ENCODE measurements at regions of chr17 and their contacts with region 1.

Region 1: DNA sequence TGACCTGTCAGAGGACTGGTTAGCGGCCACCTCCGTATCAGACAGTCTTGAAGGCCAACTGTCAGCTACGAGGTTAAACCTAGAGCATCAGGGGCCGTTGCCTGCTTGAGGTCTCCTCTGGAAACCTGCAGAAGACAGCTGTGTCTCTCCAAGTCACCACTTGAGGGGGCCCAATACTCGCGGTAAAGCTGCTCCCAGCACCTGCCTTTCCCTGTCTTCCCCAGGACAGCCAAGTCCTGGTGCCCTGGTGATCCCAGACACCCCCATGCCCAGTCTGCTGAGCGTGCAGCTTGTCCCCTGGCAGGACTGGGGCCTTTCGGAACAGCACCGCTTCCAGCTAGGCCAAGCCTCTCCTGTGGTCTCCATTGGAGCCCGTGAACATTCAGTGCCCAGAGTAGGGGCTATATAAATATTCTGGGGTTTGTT is 80.1 kb downstream of the DNAH17 start:
- DNase-seq: no peak
- H3K4me3 ChIP-seq: no peak overlapping the region
- H3K27me3 ChIP-seq: peaks cover 4% of the 10 kb centered on the region; the same call in 1 of the 2 replicates
- CTCF ChIP-seq: peak; percentile 78

Region 2: GRCh38 chr17:78484300-78485246 is 12.6 kb before region 1 on chr17:
- CTCF ChIA-PET with region 1: interaction called, 14 read pairs
- POLR2A ChIA-PET with region 1: no interaction called
- DNase-seq: no peak
- H3K4me3 ChIP-seq: peak overlapping the region; percentile 31
- H3K27me3 ChIP-seq: peaks cover 2% of the 10 kb centered on the region; the same call in 1 of the 2 replicates
- CTCF ChIP-seq: no peak

Region 3: GRCh38 chr17:78708510-78708973 is 211.4 kb after region 1 on chr17:
- CTCF ChIA-PET with region 1: interaction called, 83 read pairs
- POLR2A ChIA-PET with region 1: no interaction called
- DNase-seq: peak; percentile 39
- H3K4me3 ChIP-seq: no peak overlapping the region
- H3K27me3 ChIP-seq: no peaks in the 10 kb centered on the region
- CTCF ChIP-seq: peak; percentile 89

Region 4: GRCh38 chr17:78745407-78746088 is 248.4 kb after region 1 on chr17:
- CTCF ChIA-PET with region 1: interaction called, 11 read pairs
- POLR2A ChIA-PET with region 1: no interaction called
- DNase-seq: no peak
- H3K4me3 ChIP-seq: no peak overlapping the region
- H3K27me3 ChIP-seq: no peaks in the 10 kb centered on the region
- CTCF ChIP-seq: peak; percentile 47

Region 5: GRCh38 chr17:78798695-78799559 is 301.8 kb after region 1 on chr17:
- CTCF ChIA-PET with region 1: interaction called, 11 read pairs
- POLR2A ChIA-PET with region 1: no interaction called
- DNase-seq: no peak
- H3K4me3 ChIP-seq: no peak overlapping the region
- H3K27me3 ChIP-seq: no peaks in the 10 kb centered on the region
- CTCF ChIP-seq: peak; percentile 37

Region 6: DNA sequence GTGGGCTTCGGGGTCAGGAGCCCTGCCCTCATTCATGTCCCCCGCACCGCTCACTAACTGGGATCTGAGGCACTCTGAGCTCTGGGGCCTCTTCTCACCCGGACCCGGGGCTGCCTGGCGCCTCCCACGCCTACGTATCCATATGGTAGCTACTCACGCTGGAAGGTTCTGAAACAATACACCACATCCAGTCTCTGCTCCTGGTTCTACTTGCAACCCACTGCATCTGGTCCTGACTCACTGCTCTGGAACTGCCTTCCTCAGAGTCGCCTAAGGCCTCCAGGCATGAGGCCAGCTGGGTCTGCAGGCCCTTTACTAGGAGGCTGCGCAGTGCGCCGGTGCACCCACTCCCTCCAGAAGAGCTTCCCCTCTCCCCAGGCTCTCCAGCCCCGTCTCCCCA is 325.4 kb after region 1 on chr17:
- CTCF ChIA-PET with region 1: interaction called, 10 read pairs
- POLR2A ChIA-PET with region 1: no interaction called
- DNase-seq: peak; percentile 95
- H3K4me3 ChIP-seq: no peak overlapping the region
- H3K27me3 ChIP-seq: no peaks in the 10 kb centered on the region
- CTCF ChIP-seq: no peak

Measured in BJ (cell line).